ENCODE measurements at regions of chr12 and their contacts with region 1.

Region 1: GRCh38 chr12:79522257-79522988 is 168.3 kb downstream of the PAWR start:
- DNase-seq: no peak
- H3K4me3 ChIP-seq: no peak overlapping the region
- H3K27ac ChIP-seq: no peak overlapping the region
- H3K4me1 ChIP-seq: no peaks in the 10 kb centered on the region
- CTCF ChIP-seq: no peak

Region 2: GRCh38 chr12:79001404-79001803 is 521.0 kb before region 1 on chr12:
- CTCF ChIA-PET with region 1: no interaction called
- POLR2A ChIA-PET with region 1: interaction called, 11 read pairs
- intact Hi-C with region 1: no loop called
- DNase-seq: no peak
- H3K4me3 ChIP-seq: no peak overlapping the region
- H3K27ac ChIP-seq: no peak overlapping the region
- H3K4me1 ChIP-seq: no peaks in the 10 kb centered on the region
- CTCF ChIP-seq: no peak